Activated naive CD4-positive, alpha-beta T cell treated with anti-CD3 and anti-CD28 coated beads, Interleukin-2, amount 10 ng/mL, durations not matched to agents 7 days and 5 days (primary cell): ENCODE measurements at regions of chr12 and their contacts with region 1.

Region 1: GRCh38 chr12:49776413-49776812 is 35.1 kb downstream of the TMBIM6 start:
- DNase-seq: peak; percentile 70
- H3K4me3 Mint-ChIP-seq: no peak overlapping the region
- H3K27ac Mint-ChIP-seq: no peak overlapping the region
- H3K4me1 Mint-ChIP-seq: peaks cover 10% of the 10 kb centered on the region
- H3K27me3 Mint-ChIP-seq: peaks cover 33% of the 10 kb centered on the region

Region 2: DNA sequence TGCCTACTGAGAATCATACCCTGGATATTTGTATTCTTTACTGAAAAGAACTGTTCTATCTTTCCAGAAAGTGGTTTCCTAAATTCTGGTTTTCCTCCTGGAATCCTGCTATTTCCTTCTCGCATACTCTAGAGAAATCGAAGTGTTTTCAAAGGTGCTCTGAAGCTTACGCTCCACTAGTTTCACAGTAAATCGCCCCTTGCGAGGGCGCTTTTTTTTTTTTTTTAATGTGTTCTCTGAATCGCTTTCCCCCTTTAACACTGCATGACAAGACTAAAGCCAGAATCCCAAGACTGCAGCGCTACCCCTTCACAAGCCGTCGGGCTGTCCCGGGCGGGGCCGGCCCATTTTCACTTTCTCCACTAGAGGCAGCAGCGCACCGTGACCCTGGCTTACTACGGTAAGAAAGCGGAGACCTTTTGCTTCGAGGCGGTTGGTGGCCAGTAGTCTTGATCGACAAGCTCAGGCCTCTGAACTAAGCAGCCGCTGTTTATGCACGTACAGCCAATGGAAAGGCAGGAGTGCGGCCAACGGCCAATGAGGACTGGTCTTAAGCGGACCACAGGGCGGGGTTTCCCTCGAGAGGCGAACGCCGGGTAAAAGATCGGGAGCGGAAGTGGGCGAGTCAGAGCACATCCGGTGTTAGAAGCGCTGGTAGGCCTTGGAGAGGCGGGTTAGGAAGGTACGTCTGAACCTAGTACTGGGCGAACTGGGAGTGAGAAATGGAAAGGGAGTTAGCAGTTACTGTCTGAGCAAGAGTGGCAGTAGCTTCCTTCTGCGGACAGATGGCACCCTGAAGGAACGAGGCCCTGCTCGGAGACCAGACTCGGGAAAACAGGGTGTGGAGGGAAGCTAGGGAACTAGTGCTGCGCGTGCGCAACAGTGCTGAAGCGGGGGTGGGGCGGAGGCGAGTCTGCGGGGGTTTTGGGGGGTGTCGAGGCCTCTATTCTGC is 35.2 kb before region 1 on chr12 and contains the start of gene TMBIM6:
- CTCF ChIA-PET with region 1: interaction called, 16 read pairs
- DNase-seq: peak; percentile 99
- H3K4me3 Mint-ChIP-seq: peak within 1 kb of the TSS; percentile 80
- H3K27ac Mint-ChIP-seq: peak within 1 kb of the TSS; percentile 97
- H3K4me1 Mint-ChIP-seq: peaks cover 40% of the 10 kb centered on the region
- H3K27me3 Mint-ChIP-seq: peaks cover 4% of the 10 kb centered on the region

Region 3: GRCh38 chr12:49763006-49763591 is 13.3 kb before region 1 on chr12:
- CTCF ChIA-PET with region 1: interaction called, 21 read pairs
- DNase-seq: peak; percentile 87
- H3K4me3 Mint-ChIP-seq: peak overlapping the region; percentile 19
- H3K27ac Mint-ChIP-seq: peak overlapping the region; percentile 91
- H3K4me1 Mint-ChIP-seq: peaks cover 44% of the 10 kb centered on the region
- H3K27me3 Mint-ChIP-seq: peaks cover 7% of the 10 kb centered on the region

Region 4: GRCh38 chr12:49838973-49839633 is 62.7 kb after region 1 on chr12:
- CTCF ChIA-PET with region 1: interaction called, 67 read pairs
- DNase-seq: peak; percentile 63
- H3K4me3 Mint-ChIP-seq: no peak overlapping the region
- H3K27ac Mint-ChIP-seq: no peak overlapping the region
- H3K4me1 Mint-ChIP-seq: peaks cover 32% of the 10 kb centered on the region
- H3K27me3 Mint-ChIP-seq: no peaks in the 10 kb centered on the region

Region 5: GRCh38 chr12:49945394-49946080 is 169.1 kb after region 1 on chr12:
- CTCF ChIA-PET with region 1: interaction called, 15 read pairs
- DNase-seq: peak; percentile 87
- H3K4me3 Mint-ChIP-seq: peak overlapping the region; percentile 74
- H3K27ac Mint-ChIP-seq: peak overlapping the region; percentile 87
- H3K4me1 Mint-ChIP-seq: peaks cover 41% of the 10 kb centered on the region
- H3K27me3 Mint-ChIP-seq: peaks cover 36% of the 10 kb centered on the region